B cell (primary cell): ENCODE measurements at regions of chr10 and their contacts with region 1.

Region 1: GRCh38 chr10:69092959-69093850 is 5.3 kb downstream of the SRGN start:
- DNase-seq: peak; percentile 90
- ATAC-seq: peak; percentile 73
- H3K4me3 ChIP-seq: peak overlapping the region in 1 of 5 experiments; percentile 8
- H3K4me3 Mint-ChIP-seq: no peak overlapping the region
- H3K27ac ChIP-seq: no peak overlapping the region
- H3K27ac Mint-ChIP-seq: no peak overlapping the region
- H3K4me1 ChIP-seq: peaks cover 36 to 37% of the 10 kb centered on the region in 2 donors
- H3K4me1 Mint-ChIP-seq: peaks cover 39% of the 10 kb centered on the region
- H3K27me3 ChIP-seq: no peaks in the 10 kb centered on the region
- H3K27me3 Mint-ChIP-seq: no peaks in the 10 kb centered on the region
- CTCF ChIP-seq: peak; percentile 83

Region 2: DNA sequence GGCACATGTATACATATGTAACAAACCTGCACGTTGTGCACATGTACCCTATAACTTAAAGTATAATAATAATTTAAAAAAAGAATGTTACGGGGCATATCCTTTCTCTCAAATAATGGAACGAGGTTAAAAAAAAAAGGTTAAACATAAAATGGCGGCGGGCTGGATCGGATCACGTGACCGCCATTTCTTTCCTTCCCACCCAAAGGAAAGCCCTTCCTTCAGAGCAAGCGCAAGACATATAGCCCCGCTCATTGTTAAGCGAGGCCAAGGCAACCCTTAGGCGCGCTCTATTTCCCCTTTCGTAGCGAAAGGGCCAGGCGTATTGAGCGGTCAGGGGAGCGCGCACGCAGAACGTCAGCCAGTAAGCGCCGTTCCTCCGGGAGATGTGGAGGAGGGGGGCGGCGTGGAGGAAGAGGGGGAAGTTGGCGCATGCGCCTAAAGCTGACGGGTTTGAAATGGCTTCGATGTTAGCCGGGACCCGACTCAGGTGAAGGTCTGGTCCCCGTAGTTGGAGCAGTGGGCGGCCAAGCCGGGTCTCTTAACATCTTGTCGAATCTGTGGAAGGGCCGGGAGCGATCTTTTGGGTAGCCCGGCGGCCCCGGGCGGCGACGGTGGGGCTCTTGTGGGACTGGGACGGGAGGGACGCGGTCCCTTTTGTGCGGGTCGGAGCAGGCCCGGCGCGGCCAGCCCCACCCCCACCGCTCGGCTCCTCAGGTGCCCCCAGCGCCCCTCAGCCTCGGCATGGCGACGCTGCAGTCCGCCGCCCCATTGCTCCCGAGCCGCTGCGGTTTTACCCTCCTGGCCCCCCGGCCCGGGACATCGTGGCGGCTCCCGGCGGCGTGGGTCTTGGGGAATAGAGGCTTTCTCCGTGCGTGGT is 372.2 kb before region 1 on chr10 and contains the start of gene CCAR1:
- CTCF ChIA-PET with region 1: no interaction called
- POLR2A ChIA-PET with region 1: no interaction called
- intact Hi-C with region 1: loop called (anchors 10 kb)
- DNase-seq: peak; percentile 99
- ATAC-seq: peak; percentile 97
- H3K4me3 ChIP-seq: peak within 1 kb of the TSS; percentile 58 to 96 (median 93)
- H3K4me3 Mint-ChIP-seq: peak within 1 kb of the TSS; percentile 96
- H3K27ac ChIP-seq: peak within 1 kb of the TSS; percentile 81 to 95
- H3K27ac Mint-ChIP-seq: peak within 1 kb of the TSS; percentile 97
- H3K4me1 ChIP-seq: peaks cover 10 to 15% of the 10 kb centered on the region in 2 donors
- H3K4me1 Mint-ChIP-seq: peaks cover 17% of the 10 kb centered on the region
- H3K27me3 ChIP-seq: no peaks in the 10 kb centered on the region
- H3K27me3 Mint-ChIP-seq: no peaks in the 10 kb centered on the region
- CTCF ChIP-seq: no peak
- total RNA-seq, gene CCAR1: 98.9 and 101 TPM in 2 replicates

Region 3: DNA sequence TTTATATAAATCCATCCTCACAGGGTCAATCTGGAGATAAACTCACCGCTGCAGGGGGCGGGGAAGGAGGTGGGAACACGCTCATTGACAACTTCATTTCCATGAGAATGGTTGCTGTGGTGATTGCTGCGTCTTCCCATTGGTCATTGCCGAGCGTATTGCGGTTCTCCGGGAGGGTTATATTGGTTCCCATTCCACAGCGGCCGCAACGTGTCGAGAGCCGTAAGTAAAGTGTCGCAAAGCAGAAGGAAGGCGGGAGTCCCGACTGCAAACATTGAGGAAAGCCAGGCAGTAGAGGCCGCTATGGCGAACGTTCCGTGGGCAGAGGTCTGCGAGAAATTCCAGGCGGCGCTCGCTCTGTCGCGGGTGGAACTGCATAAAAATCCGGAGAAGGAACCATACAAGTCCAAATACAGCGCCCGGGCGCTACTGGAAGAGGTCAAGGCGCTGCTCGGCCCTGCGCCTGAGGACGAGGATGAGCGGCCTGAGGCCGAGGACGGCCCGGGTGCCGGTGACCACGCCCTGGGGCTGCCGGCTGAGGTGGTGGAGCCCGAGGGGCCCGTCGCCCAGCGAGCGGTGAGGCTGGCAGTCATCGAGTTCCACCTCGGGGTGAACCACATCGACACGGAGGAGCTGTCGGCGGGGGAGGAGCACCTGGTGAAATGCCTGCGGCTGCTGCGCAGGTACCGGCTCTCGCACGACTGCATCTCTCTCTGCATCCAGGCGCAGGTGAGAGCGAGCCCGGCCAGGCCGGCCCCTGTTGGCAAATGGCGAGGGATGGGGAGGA is 104.5 kb before region 1 on chr10 and contains the start of gene KIFBP:
- CTCF ChIA-PET with region 1: interaction called, 17 read pairs
- POLR2A ChIA-PET with region 1: no interaction called
- intact Hi-C with region 1: loop called (anchors 1 kb)
- DNase-seq: peak; percentile 92
- ATAC-seq: peak; percentile 87
- H3K4me3 ChIP-seq: peak within 1 kb of the TSS; percentile 67 to 90 (median 79)
- H3K4me3 Mint-ChIP-seq: peak within 1 kb of the TSS; percentile 95
- H3K27ac ChIP-seq: peak within 1 kb of the TSS in 1 of 2 donors; percentile 59
- H3K27ac Mint-ChIP-seq: peak within 1 kb of the TSS; percentile 91
- H3K4me1 ChIP-seq: peaks cover 18 to 20% of the 10 kb centered on the region in 2 donors
- H3K4me1 Mint-ChIP-seq: peaks cover 40% of the 10 kb centered on the region
- H3K27me3 ChIP-seq: no peaks in the 10 kb centered on the region
- H3K27me3 Mint-ChIP-seq: no peaks in the 10 kb centered on the region
- CTCF ChIP-seq: peak; percentile 32
- total RNA-seq, gene KIFBP: 13.5 and 15.7 TPM in 2 replicates

Region 4: DNA sequence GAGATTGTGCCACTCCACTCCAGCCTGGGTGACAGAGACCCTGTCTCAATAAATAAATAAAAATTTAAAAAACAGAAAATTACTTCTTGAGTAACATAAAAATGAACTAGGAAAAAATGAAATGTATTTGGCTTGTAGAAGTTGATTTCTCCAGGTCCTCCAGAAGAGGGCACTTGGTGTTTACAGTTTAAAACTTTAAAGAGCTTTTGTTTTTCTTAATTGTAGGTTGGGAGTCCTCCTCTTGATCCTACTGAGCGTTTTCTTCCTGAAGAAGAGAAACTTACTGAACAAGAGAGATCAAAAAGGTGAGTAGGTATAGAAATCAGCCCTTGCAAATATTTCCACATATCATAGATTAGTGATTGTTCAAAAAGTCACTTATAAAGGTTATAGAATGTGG is 88.4 kb before region 1 on chr10:
- CTCF ChIA-PET with region 1: interaction called, 197 read pairs
- POLR2A ChIA-PET with region 1: interaction called, 4 read pairs
- intact Hi-C with region 1: loop called (anchors 1 kb)
- DNase-seq: peak; percentile 52
- ATAC-seq: no peak
- H3K4me3 ChIP-seq: no peak overlapping the region
- H3K4me3 Mint-ChIP-seq: no peak overlapping the region
- H3K27ac ChIP-seq: no peak overlapping the region
- H3K27ac Mint-ChIP-seq: no peak overlapping the region
- H3K4me1 ChIP-seq: no peaks in the 10 kb centered on the region
- H3K4me1 Mint-ChIP-seq: no peaks in the 10 kb centered on the region
- H3K27me3 ChIP-seq: no peaks in the 10 kb centered on the region
- H3K27me3 Mint-ChIP-seq: no peaks in the 10 kb centered on the region
- CTCF ChIP-seq: peak; percentile 72

Region 5: DNA sequence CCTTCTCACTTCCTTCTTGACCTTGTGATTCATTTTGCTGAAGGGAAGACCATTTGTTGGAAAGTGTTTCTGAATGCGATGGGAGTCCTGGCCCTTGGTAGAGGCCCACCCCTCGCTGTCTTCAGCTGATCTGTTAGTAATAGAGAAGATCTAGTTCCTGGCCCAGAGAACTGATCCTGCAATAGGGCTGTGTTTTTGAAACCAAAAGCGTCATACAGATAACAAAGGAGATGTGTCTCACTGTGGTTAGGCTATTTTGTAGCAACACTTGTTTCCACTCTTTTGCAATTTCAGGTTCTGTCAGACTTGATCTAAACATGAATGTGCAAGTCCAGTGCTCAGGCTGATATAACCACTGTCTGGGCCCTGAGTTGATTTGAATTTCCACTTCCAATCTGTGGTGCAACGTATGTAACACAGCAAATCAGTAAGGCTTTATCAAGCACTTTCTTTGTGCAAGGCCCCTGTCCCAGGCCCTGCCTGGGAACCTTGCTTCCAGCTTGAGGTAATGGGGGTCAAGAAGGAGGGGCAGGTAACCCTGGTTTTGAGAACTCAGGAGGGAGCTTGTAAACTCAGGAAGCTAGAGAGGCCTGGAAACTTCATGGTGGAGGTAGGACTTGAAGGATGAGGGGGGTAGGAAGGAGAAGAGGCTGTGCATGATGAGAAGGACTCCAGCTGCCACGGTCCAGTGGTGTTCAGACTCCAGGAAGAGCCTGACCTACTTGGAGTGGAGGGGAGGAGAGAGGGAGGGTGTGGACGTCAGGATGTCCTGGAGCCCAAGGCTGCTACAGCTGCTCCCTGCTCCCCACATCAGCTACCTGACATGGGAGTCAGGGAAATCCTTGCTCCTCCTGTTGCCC is 47.5 kb before region 1 on chr10:
- CTCF ChIA-PET with region 1: interaction called, 4 read pairs
- POLR2A ChIA-PET with region 1: no interaction called
- intact Hi-C with region 1: loop called (anchors 2 kb)
- DNase-seq: no peak
- ATAC-seq: peak; percentile 26
- H3K4me3 ChIP-seq: peak overlapping the region in 1 of 5 experiments; percentile 21
- H3K4me3 Mint-ChIP-seq: no peak overlapping the region
- H3K27ac ChIP-seq: peak overlapping the region; percentile 2 to 41
- H3K27ac Mint-ChIP-seq: peak overlapping the region; percentile 82
- H3K4me1 ChIP-seq: peaks cover 12 to 25% of the 10 kb centered on the region in 2 donors
- H3K4me1 Mint-ChIP-seq: peaks cover 23% of the 10 kb centered on the region
- H3K27me3 ChIP-seq: no peaks in the 10 kb centered on the region
- H3K27me3 Mint-ChIP-seq: no peaks in the 10 kb centered on the region
- CTCF ChIP-seq: no peak